Right cardiac atrium (tissue), 5 donors: ENCODE measurements at regions of chr10 and their contacts with region 1.

Region 1: GRCh38 chr10:129046065-129046681 is 420.9 kb upstream of the MGMT start:
- DNase-seq: peak in 2 of 3 donors; percentile 72 to 75
- ATAC-seq: peak; percentile 66 to 84
- H3K4me3 ChIP-seq: peak overlapping the region; percentile 26
- H3K27ac ChIP-seq: no peak overlapping the region
- H3K4me1 ChIP-seq: no peaks in the 10 kb centered on the region
- H3K27me3 ChIP-seq: no peaks in the 10 kb centered on the region

Region 2: DNA sequence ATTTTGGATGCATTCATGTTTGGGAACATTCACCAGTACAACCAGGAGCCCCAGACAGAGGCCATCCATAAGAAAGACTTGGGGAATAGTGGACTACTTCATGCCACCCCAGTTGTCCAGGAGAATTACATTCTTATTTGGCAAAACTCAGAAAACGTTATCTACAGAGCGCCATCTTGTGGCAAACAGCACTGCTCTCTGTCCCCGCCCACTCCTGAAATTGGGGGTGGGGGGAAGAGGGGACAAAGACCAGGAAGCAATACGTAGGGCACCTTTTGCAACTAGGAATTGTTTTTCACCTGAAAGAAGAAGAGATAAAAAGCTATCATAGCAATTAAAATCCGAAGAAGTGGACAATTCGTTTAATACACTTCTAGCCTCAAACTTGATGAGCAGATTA is 286.3 kb after region 1 on chr10:
- intact Hi-C with region 1: loop called in 1 of 4 experiments (anchors 10 kb)
- DNase-seq: no peak
- ATAC-seq: no peak
- H3K4me3 ChIP-seq: no peak overlapping the region
- H3K27ac ChIP-seq: no peak overlapping the region
- H3K4me1 ChIP-seq: no peaks in the 10 kb centered on the region
- H3K27me3 ChIP-seq: no peaks in the 10 kb centered on the region